Mammary epithelial cell (primary cell): ENCODE measurements at regions of chr10 and their contacts with region 1.

Region 1: GRCh38 chr10:86141896-86142295 is 224.7 kb downstream of the GRID1 start:
- DNase-seq: no peak
- H3K4me3 ChIP-seq: no peak overlapping the region
- H3K27ac ChIP-seq: no peak overlapping the region
- H3K4me1 ChIP-seq: no peaks in the 10 kb centered on the region
- H3K27me3 ChIP-seq: no peaks in the 10 kb centered on the region
- CTCF ChIP-seq: no peak

Region 2: DNA sequence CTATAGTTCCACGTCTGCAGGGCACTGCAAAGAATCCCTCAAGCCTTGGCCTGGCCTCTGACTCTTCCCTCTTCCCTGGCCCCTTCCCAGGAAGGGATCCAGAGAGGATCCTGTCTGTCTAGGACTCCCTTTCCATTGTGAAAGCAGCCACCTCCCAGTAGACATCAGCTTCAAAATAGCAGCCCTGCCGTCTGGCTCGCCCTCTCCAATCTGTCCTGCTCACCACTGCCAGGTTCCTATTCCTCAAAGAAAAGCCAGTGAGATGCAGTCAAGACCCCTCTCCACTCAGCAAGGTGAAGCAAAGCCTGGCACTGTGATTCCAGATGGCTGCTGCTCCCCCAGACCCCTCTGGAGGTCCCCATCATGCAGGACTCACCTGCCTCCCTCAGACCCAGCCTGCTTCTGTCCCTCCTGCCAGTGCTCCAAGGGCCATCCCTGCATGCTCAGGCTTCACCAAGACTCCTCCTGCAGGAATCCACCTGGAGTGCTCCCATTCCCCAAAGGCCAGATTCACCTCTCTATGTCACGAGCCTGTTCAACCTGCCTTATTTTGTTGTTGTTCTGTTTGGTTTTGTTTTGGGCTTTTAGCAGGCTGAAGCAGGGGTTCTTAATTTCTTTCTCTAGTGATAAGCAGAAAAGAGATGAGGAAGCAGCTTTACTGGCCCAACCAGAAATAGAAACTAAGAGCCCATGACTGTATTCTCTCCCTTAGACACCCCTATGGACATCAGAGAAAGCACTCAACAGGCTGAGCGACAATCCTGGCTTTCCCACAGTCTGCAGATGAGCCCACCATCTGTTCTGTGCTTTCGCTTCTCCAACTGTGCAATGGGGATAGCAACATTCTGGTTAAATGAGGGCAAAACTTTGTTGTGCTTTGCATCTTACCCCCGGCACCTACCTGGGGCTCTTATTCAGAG is 80.4 kb before region 1 on chr10:
- CTCF ChIA-PET with region 1: no interaction called
- dilution Hi-C with region 1: loop called (anchors 5 kb)
- in situ Hi-C with region 1: no loop called
- intact Hi-C with region 1: no loop called
- DNase-seq: no peak
- H3K4me3 ChIP-seq: no peak overlapping the region
- H3K27ac ChIP-seq: no peak overlapping the region
- H3K4me1 ChIP-seq: no peaks in the 10 kb centered on the region
- H3K27me3 ChIP-seq: no peaks in the 10 kb centered on the region
- CTCF ChIP-seq: no peak

Region 3: DNA sequence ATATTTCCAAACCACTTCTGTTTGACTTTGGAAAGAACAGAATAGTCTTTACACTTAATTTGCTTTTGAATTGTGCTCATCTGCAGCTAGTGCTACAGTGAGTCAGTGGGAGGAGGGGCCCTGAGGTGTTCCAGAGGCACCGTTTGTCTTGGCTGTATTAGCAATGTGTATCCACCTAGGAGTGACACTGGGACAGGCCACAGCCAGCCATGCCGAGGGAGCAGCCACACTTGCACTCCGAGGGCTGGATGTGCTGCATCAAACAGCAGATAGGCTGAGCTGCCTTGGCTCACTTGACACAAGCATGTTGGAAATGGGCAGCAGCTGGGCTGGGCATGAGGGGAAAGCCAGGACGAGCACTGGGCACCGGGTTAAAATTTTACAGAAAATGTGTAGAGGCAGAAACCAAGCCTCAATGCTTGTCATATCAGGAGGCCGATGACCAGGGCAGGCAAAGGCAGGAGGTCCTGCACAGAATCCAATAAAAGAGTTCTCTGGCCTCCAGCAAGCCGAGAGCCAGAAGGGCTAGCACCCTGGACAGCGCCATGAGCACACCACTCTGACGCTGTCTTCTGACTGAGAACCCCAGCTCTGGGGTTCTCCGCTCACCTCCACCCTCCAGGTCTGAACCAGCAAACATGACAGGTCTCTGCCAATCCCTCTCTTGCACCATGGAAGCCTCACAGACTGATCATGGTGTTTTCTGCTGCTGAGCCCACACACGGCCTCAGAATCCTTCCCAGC is 61.4 kb after region 1 on chr10:
- CTCF ChIA-PET with region 1: no interaction called
- dilution Hi-C with region 1: no loop called
- in situ Hi-C with region 1: no loop called
- intact Hi-C with region 1: no loop called
- DNase-seq: no peak
- H3K4me3 ChIP-seq: no peak overlapping the region
- H3K27ac ChIP-seq: no peak overlapping the region
- H3K4me1 ChIP-seq: no peaks in the 10 kb centered on the region
- H3K27me3 ChIP-seq: no peaks in the 10 kb centered on the region
- CTCF ChIP-seq: no peak

Region 4: GRCh38 chr10:86234551-86235270 is 92.8 kb after region 1 on chr10:
- CTCF ChIA-PET with region 1: no interaction called
- dilution Hi-C with region 1: loop called (anchors 5 kb)
- in situ Hi-C with region 1: no loop called
- intact Hi-C with region 1: no loop called
- DNase-seq: no peak
- H3K4me3 ChIP-seq: no peak overlapping the region
- H3K27ac ChIP-seq: no peak overlapping the region
- H3K4me1 ChIP-seq: no peaks in the 10 kb centered on the region
- H3K27me3 ChIP-seq: no peaks in the 10 kb centered on the region
- CTCF ChIP-seq: no peak